ENCODE measurements at regions of chr17 and their contacts with region 1.

Region 1: DNA sequence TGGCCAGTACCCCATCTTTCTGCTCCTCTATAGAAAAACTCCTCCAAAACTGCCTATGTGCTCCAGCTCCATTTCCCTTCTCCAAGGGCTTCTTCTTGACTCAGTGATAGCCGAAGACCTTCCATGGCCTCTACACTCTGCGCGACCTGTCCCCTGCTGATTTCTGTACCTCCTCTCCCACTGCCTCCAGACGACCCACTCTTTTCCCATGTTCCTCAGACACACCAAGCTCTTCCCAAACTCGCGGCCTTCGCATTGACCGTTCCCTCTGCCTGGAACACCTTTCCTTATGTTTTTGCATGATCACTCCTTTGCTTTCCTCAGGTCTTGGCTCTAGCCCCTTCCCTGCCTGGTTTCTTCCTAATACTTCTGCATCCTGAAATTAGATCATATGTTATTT is 255.6 kb upstream of the SDK2 start:
- DNase-seq: no peak
- H3K4me3 ChIP-seq: no peak overlapping the region
- H3K27ac ChIP-seq: no peak overlapping the region
- H3K4me1 ChIP-seq: no peaks in the 10 kb centered on the region
- H3K27me3 ChIP-seq: peaks cover 18% of the 10 kb centered on the region

Region 2: GRCh38 chr17:73833775-73834488 is 65.9 kb before region 1 on chr17:
- in situ Hi-C with region 1: loop called (anchors 10 kb)
- DNase-seq: no peak
- H3K4me3 ChIP-seq: no peak overlapping the region
- H3K27ac ChIP-seq: no peak overlapping the region
- H3K4me1 ChIP-seq: no peaks in the 10 kb centered on the region
- H3K27me3 ChIP-seq: peaks cover 11% of the 10 kb centered on the region; the same call in 1 of the 2 replicates

Region 3: GRCh38 chr17:74325743-74326379 is 426.0 kb after region 1 on chr17 and contains the start of gene KIF19:
- in situ Hi-C with region 1: no loop called
- DNase-seq: peak; percentile 35
- H3K4me3 ChIP-seq: no peak within 1 kb of the TSS
- H3K27ac ChIP-seq: no peak within 1 kb of the TSS
- H3K4me1 ChIP-seq: no peaks in the 10 kb centered on the region
- H3K27me3 ChIP-seq: peaks cover 19% of the 10 kb centered on the region
- total RNA-seq, gene KIF19: not detected in 2 replicates